ENCODE measurements at regions of chr3 and their contacts with region 1.

Region 1: DNA sequence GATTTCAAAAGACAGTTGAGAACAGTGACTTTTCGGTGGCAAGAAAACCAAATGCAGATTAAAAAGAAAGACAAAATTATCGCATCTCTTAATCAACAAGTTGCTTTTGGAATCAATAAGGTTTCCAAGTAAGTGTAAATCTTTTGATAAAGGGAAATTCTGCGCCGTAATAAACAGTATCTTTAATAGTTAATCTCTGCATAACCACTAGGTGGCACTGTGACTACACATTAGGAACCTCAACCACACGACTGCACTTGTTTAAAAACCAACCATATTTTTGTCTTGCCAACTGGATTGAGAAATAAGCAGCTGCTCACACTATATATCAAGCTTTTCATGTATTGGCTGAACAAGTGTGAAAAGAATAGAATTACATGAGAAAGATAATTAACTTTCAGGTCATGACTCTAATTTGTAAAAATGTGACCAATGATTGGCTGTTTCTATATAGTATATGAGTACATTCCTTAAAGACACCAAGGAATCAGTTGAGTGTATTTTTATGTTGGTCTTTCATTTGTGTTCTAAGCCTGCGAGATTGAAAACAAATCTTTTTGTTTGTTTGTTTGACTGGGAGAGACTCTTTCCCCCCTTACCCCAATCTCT is 72.7 kb downstream of the DZIP3 start:
- DNase-seq: peak in 1 of 5 donors; percentile 12
- ATAC-seq: peak in 3 of 4 donors; percentile 45 to 74 (median 68)
- H3K4me3 ChIP-seq: peak overlapping the region in 2 of 12 donors; percentile 9 to 16
- H3K27ac ChIP-seq: no peak overlapping the region
- H3K4me1 ChIP-seq: peaks cover 0 to 5% (median 0%) of the 10 kb centered on the region in 12 donors
- H3K27me3 ChIP-seq: no peaks in the 10 kb centered on the region
- CTCF ChIP-seq: peak; percentile 64 to 85 (median 80)
- POLR2A ChIP-seq: no peak

Region 2: GRCh38 chr3:108907194-108907593 is 245.0 kb after region 1 on chr3:
- intact Hi-C with region 1: loop called in 3 of 10 experiments (anchors 2 to 10 kb)
- DNase-seq: no peak
- ATAC-seq: no peak
- H3K4me3 ChIP-seq: no peak overlapping the region
- H3K27ac ChIP-seq: no peak overlapping the region
- H3K4me1 ChIP-seq: no peaks in the 10 kb centered on the region
- H3K27me3 ChIP-seq: no peaks in the 10 kb centered on the region
- CTCF ChIP-seq: no peak
- POLR2A ChIP-seq: no peak

Region 3: DNA sequence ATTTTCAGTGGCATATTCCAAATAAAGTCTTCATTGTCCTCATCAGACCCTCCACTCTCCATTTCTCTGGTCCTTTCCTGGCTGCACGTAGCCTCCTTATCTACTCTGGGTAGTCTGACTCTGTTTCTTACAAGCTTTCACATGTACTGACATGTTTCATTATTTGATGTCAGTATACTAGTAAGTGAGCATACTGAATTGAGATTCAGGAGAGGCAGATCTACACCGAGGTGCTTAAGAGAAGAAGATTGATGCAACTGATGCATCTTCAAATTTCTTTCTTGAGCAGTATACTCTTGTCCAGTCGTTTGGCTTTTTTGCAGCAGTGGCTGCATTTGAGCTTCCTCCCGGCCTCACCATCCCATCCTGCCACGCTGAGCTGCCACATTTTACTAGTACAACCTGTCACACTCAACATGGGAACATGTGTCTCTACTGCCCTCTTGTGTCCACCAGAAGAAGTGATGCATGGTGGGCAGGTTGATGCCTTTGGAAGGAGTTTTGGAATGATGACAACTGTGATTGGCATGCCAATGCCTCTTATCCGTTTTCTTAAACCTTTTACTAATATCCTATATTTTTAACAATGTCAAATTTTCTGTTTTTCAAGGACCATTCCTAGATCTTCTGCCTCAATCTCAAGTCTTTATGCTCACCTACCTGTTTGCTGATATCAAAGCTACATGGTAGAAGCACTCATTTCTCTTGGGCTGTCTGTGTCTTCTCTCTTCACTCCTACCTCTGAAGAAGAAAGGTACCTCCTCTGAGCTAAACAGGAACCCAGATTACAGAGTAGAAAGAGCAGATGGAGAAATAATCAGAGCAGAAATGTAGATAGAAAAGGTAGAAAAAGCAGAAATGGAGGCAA is 252.8 kb after region 1 on chr3:
- intact Hi-C with region 1: loop called in 9 of 10 experiments (anchors 1 to 10 kb)
- DNase-seq: peak in 1 of 5 donors; percentile 10
- ATAC-seq: peak in 3 of 4 donors; percentile 37 to 75 (median 69)
- H3K4me3 ChIP-seq: no peak overlapping the region
- H3K27ac ChIP-seq: no peak overlapping the region
- H3K4me1 ChIP-seq: no peaks in the 10 kb centered on the region
- H3K27me3 ChIP-seq: no peaks in the 10 kb centered on the region
- CTCF ChIP-seq: peak; percentile 55 to 78 (median 70)
- POLR2A ChIP-seq: no peak

Region 4: GRCh38 chr3:109071350-109072142 is 409.3 kb after region 1 on chr3:
- intact Hi-C with region 1: loop called in 1 of 10 experiments (anchors 10 kb)
- DNase-seq: peak in 3 of 5 donors; percentile 8 to 40 (median 21)
- ATAC-seq: peak in 3 of 4 donors; percentile 62 to 70 (median 69)
- H3K4me3 ChIP-seq: no peak overlapping the region
- H3K27ac ChIP-seq: no peak overlapping the region
- H3K4me1 ChIP-seq: peaks cover 0 to 17% (median 6%) of the 10 kb centered on the region in 12 donors
- H3K27me3 ChIP-seq: no peaks in the 10 kb centered on the region
- CTCF ChIP-seq: peak in 2 of 12 donors; percentile 15 to 25
- POLR2A ChIP-seq: no peak

Region 5: DNA sequence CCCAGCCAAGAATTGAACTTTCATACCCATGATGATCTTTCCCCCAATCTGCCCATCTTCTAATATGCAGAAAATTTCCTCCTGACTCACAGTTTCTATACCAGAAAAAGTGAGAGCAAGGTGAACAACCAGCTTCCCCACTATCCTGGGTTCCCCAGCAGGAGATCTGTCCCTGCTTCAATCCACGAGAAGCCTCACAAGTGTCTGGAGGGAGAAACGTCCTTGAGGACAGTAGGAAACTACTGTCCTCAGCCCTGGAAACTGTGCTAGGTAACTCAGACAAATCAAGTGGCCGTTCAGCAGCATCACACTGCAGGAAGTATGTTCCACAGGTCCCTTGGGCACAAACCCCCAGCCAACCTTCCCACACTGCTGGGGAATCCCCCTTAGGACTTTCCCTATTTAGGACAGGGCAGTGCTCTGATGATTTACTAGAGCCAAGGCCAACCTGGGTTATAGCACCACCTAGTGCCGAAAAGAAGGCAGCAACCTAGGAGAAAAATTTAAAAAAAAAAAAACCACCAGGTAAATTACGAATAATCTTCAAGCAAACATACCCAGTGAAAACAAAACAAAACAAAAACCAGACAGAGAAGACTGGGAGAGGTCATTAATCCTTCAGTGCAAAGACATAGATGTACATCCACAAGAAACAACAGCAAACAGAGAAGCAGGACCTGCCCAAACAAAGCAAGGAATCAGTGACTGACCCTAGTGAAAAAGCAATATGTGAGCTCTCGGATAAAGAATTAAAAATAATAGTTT is 419.7 kb after region 1 on chr3:
- intact Hi-C with region 1: loop called in 3 of 10 experiments (anchors 5 to 10 kb)
- DNase-seq: no peak
- ATAC-seq: peak in 2 of 4 donors; percentile 41 to 54
- H3K4me3 ChIP-seq: no peak overlapping the region
- H3K27ac ChIP-seq: no peak overlapping the region
- H3K4me1 ChIP-seq: no peaks in the 10 kb centered on the region
- H3K27me3 ChIP-seq: no peaks in the 10 kb centered on the region
- CTCF ChIP-seq: peak; percentile 46 to 66 (median 52)
- POLR2A ChIP-seq: no peak

Measured in heart left ventricle (tissue), 16 donors.